GM10248 (cell line): ENCODE measurements at regions of chr3 and their contacts with region 1.

Region 1: GRCh38 chr3:187025656-187026316 is 95.5 kb downstream of the ST6GAL1 start:
- DNase-seq: no peak
- CTCF ChIP-seq: no peak

Region 2: DNA sequence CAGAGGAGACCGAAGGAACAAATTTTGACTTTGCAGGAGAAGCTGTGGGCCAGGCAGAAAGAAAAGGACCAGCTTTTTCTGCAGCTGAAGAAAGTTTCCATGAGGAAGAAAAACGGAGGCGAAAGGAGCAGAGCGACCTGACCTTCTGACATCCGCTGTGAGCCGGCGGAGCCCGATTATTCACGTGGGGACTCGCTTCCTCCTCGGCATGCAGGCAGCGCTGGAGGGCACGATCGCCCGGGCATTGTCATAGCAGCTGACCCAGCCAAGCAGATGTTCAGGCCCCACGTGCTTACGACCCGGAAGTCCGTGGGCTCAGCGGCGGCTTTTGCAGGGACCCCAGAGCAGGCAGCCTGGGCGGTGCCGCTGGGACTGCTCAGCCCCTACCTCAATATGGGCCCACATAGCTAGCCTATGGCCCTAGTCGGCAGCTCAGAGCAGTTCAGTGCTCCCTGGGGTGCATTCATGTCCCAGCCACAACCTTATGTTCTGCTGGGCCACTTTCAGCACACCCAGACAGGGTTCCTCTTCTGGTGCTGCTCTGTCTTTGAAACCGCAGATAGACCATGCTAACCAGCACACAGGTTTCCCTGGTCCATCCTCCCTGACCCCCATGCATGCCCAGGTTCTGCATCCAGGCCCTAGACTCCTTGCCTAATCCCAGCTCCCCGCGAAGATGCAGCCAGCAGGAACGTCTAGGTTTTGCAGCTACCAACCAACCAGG is 252.9 kb before region 1 on chr3:
- CTCF ChIA-PET with region 1: no interaction called
- POLR2A ChIA-PET with region 1: no interaction called
- DNase-seq: peak; percentile 84
- CTCF ChIP-seq: no peak

Region 3: DNA sequence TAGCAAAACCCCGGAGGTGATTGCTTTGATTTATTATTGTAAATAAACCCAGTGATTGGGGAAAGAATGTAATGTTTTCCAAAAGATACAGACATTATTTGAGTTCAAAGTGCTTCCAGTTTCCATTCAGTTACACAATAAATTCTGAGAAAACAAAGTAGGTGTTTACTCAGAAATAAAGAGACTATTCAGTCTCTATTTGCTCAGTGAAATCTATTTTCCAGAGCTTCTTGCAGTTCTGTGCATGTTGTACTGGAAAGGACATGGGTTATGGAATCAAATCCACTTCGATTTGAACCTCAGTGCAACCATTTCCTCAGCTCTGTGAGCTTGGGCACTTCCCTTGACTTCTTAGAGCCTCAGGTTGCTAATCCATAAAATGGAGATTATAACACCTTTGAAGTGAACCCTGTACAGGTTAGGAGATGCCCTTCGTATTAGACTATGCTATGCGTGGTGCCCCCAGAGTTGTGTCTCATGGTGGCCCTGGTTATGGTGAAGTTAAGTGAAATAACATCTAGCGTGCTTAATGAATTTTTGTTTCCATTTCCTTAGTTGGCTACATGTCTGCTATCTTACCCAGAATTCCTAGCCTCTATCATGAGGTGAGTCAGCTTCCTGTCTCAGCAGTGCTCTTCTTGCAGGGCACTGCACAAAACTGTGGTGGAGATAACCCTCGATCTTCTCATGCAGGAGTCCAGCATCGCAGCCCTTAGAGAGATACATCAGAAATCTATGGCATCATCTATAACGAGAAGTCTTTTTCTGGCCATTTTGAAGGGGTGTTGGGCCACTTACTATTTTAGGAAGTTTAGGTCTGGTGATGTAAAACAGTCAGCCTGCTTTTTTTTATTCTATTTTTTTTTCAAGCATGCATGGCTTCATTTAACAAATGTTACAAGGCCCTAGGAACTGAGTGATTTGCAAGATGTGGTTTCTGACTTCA is 15.8 kb after region 1 on chr3:
- CTCF ChIA-PET with region 1: interaction called, 17 read pairs
- POLR2A ChIA-PET with region 1: interaction called, 4 read pairs
- DNase-seq: peak; percentile 29
- CTCF ChIP-seq: no peak

Region 4: GRCh38 chr3:187051719-187052366 is 26.1 kb after region 1 on chr3:
- CTCF ChIA-PET with region 1: no interaction called
- POLR2A ChIA-PET with region 1: no interaction called
- DNase-seq: no peak
- CTCF ChIP-seq: no peak

Region 5: GRCh38 chr3:187066228-187066995 is 40.6 kb after region 1 on chr3:
- CTCF ChIA-PET with region 1: interaction called, 3 read pairs
- POLR2A ChIA-PET with region 1: interaction called, 12 read pairs
- DNase-seq: peak; percentile 51
- CTCF ChIP-seq: peak; percentile 34